AG04450 (cell line): ENCODE measurements at regions of chr10 and their contacts with region 1.

Region 1: DNA sequence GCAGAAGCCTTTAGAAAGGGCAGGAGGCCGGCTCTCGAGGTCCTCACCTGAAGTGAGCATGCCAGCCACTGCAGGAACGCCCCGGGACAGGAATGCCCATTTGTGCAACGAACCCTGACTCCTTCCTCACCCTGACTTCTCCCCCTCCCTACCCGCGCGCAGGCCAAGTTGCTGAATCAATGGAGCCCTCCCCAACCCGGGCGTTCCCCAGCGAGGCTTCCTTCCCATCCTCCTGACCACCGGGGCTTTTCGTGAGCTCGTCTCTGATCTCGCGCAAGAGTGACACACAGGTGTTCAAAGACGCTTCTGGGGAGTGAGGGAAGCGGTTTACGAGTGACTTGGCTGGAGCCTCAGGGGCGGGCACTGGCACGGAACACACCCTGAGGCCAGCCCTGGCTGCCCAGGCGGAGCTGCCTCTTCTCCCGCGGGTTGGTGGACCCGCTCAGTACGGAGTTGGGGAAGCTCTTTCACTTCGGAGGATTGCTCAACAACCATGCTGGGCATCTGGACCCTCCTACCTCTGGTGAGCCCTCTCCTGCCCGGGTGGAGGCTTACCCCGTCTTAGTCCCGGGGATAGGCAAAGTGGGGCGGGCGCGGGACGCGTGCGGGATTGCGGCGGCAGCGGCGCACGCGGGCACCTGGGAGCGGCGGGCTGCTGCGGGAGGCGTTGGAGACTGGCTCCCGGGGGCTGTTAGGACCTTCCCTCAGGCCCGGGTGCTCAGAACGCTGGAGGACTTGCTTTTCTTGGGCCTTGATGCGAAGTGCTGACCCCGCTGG is at the start of gene FAS:
- DNase-seq: no peak
- H3K4me3 ChIP-seq: peak within 1 kb of the TSS; percentile 89
- H3K27ac ChIP-seq: peak within 1 kb of the TSS; percentile 84
- H3K27me3 ChIP-seq: no peaks in the 10 kb centered on the region
- CTCF ChIP-seq: no peak
- polyA plus RNA-seq, gene FAS: 67.0 and 78.4 TPM in 2 replicates

Region 2: GRCh38 chr10:88865281-88865876 is 125.2 kb before region 1 on chr10:
- CTCF ChIA-PET with region 1: no interaction called
- POLR2A ChIA-PET with region 1: no interaction called
- DNase-seq: no peak
- H3K4me3 ChIP-seq: no peak overlapping the region
- H3K27ac ChIP-seq: no peak overlapping the region
- H3K27me3 ChIP-seq: no peaks in the 10 kb centered on the region
- CTCF ChIP-seq: peak; percentile 26; the same call in 1 of the 2 replicates

Region 3: GRCh38 chr10:88944813-88945212 is 45.8 kb before region 1 on chr10:
- CTCF ChIA-PET with region 1: interaction called, 32 read pairs
- POLR2A ChIA-PET with region 1: interaction called, 6 read pairs
- DNase-seq: no peak
- H3K4me3 ChIP-seq: no peak overlapping the region
- H3K27ac ChIP-seq: no peak overlapping the region
- H3K27me3 ChIP-seq: no peaks in the 10 kb centered on the region
- CTCF ChIP-seq: no peak

Region 4: GRCh38 chr10:88949912-88950837 is 40.4 kb before region 1 on chr10:
- CTCF ChIA-PET with region 1: interaction called, 32 read pairs
- POLR2A ChIA-PET with region 1: interaction called, 6 read pairs
- DNase-seq: no peak
- H3K4me3 ChIP-seq: peak overlapping the region; percentile 60
- H3K27ac ChIP-seq: peak overlapping the region; percentile 34
- H3K27me3 ChIP-seq: no peaks in the 10 kb centered on the region
- CTCF ChIP-seq: no peak

Region 5: GRCh38 chr10:88966797-88967196 is 23.8 kb before region 1 on chr10:
- CTCF ChIA-PET with region 1: interaction called, 13 read pairs
- POLR2A ChIA-PET with region 1: no interaction called
- DNase-seq: no peak
- H3K4me3 ChIP-seq: no peak overlapping the region
- H3K27ac ChIP-seq: no peak overlapping the region
- H3K27me3 ChIP-seq: no peaks in the 10 kb centered on the region
- CTCF ChIP-seq: no peak

Region 6: DNA sequence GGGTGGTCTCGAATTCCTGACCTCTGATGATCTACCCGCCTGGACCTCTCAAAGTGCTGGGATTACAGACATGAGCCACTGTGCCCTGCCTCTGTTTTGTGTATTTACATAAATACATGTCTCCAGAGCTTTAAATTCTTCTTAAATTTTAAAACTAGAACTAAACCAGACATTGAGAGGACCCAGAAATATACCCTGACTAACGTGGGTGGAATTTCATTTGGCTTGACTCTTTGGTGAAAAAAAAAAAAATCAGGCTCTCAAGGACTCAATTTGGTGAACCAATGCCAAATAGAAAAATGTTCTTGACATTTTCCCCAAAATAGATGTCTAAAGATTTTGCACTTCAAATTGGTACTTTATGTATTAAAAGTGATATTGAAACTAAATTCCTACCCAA is 16.6 kb before region 1 on chr10:
- CTCF ChIA-PET with region 1: interaction called, 17 read pairs
- POLR2A ChIA-PET with region 1: no interaction called
- DNase-seq: no peak
- H3K4me3 ChIP-seq: no peak overlapping the region
- H3K27ac ChIP-seq: no peak overlapping the region
- H3K27me3 ChIP-seq: no peaks in the 10 kb centered on the region
- CTCF ChIP-seq: no peak

Region 7: DNA sequence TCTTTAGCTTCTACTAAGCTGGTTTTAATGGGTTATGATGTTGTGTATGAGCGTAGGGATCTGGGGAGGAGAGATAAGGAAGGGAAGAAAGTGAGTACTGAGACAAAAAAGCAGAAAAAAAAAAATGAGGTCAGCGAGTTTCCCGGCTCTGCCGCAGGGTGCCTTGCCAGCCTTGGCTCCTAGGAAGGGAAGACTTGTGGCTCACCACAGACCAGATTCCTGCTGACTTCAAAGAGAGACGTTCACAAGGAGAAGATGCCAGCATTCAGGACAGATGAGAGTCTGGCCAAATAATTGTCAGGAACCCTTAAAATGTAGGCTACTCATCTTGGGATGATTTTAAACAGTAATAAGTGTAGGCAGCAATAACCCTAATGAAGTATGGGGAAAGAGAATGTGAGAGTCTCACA is 11.4 kb before region 1 on chr10:
- CTCF ChIA-PET with region 1: interaction called, 17 read pairs
- POLR2A ChIA-PET with region 1: interaction called, 3 read pairs
- DNase-seq: no peak
- H3K4me3 ChIP-seq: no peak overlapping the region
- H3K27ac ChIP-seq: no peak overlapping the region
- H3K27me3 ChIP-seq: no peaks in the 10 kb centered on the region
- CTCF ChIP-seq: no peak

Region 8: DNA sequence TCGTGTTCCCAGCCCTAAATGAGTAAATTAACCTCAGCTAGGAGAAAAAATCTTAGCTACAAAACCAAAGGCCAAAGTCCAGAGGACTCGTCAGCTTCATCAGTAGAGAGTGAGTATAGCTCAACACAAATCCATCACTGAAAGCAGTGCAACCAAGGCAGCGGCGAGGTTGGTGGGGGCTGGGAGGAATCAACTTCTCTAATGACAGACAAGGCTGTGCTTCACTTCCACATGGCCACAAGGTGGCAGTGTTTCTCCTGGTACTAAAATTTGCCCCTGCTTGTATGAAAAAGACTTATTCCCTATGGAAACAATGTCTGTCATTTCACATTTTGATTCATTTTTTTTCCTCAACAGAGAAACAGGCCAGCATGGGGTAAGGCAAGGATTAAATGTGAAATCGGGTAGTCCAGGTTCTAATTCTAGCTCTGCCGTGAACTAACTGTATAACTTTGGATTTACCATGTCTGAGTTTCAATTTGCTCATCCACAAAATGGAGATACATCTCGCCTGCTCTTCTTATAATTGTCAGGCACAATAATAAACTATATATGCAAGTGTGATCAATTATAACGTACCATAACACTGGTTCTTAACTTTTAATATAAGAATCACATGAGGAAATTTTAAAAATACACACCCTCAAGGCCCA is 39.3 kb after region 1 on chr10:
- CTCF ChIA-PET with region 1: interaction called, 21 read pairs
- POLR2A ChIA-PET with region 1: interaction called, 3 read pairs
- DNase-seq: peak; percentile 59
- H3K4me3 ChIP-seq: no peak overlapping the region
- H3K27ac ChIP-seq: no peak overlapping the region
- H3K27me3 ChIP-seq: no peaks in the 10 kb centered on the region
- CTCF ChIP-seq: peak; percentile 85